ENCODE measurements at regions of chr10 and their contacts with region 1.

Region 1: GRCh38 chr10:87842776-87843497 is 20.4 kb downstream of the KLLN start:
- DNase-seq: no peak
- H3K4me3 ChIP-seq: no peak overlapping the region
- H3K27ac ChIP-seq: no peak overlapping the region
- H3K4me1 ChIP-seq: no peaks in the 10 kb centered on the region
- H3K27me3 ChIP-seq: no peaks in the 10 kb centered on the region
- CTCF ChIP-seq: no peak
- POLR2A ChIP-seq: no peak

Region 2: DNA sequence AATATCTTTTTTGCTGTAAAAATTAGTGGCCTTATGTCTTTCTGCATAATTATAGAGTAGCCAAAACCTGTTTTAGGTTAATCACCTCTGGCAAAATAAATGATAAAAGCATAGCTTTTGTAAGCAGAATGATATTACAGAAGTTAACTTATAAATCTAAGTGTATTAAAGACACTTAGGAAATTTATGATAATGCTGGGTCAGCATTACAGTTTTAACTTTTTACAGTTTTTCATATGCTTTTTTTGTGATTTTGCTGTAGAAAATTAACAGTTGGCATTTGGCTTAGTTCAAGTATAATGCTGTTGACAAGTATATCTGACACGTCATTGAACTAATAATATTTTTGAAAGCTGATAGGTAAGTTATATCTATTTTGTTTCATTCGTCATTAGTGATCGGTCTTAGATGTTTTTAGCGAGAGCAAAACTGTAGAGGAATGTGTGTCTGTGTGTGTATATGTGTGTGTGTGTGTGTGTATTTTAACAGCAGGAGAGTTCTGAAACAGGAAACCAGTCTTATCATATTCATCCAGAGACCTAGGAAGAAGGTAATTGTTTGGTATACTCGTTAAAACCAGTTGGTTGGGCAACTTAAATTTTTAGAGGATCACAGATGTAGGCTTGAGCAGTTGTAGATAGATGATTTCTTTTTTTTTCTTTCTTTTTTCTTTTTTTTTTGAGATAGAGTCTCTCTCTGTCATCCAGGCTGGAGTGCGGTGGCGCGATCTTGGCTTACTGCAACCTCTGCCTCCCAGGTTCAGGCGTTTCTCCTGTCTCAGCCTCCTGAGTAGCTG is 35.9 kb after region 1 on chr10:
- intact Hi-C with region 1: no loop called
- DNase-seq: no peak
- H3K4me3 ChIP-seq: no peak overlapping the region
- H3K27ac ChIP-seq: no peak overlapping the region
- H3K4me1 ChIP-seq: peaks cover 9 to 84% of the 10 kb centered on the region in 2 donors
- H3K27me3 ChIP-seq: no peaks in the 10 kb centered on the region
- CTCF ChIP-seq: no peak
- POLR2A ChIP-seq: no peak

Region 3: DNA sequence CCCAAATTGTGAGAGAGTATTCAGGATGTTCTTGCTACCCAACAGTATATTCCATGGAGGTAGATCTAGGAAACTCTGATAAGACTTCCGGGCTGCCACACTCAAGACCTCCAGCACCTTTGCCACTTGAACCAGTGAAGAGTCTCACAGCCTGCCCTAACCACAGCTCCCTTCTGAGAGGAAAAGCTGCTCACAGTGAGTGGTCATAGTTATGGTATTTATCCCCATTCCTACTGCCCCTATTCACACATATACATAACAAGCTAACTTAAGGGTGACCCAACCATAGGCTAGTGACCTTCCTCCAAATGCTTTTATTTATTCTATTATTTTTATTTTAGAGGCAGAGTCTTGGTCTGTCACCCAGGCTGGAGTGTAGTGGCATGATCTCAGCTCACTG is 176.8 kb after region 1 on chr10:
- intact Hi-C with region 1: no loop called
- DNase-seq: no peak
- H3K4me3 ChIP-seq: no peak overlapping the region
- H3K27ac ChIP-seq: no peak overlapping the region
- H3K4me1 ChIP-seq: no peaks in the 10 kb centered on the region
- H3K27me3 ChIP-seq: no peaks in the 10 kb centered on the region
- CTCF ChIP-seq: no peak
- POLR2A ChIP-seq: no peak

Region 4: GRCh38 chr10:88401671-88402347 is 558.9 kb after region 1 on chr10:
- intact Hi-C with region 1: loop called in 1 of 2 experiments (anchors 10 kb)
- DNase-seq: no peak
- H3K4me3 ChIP-seq: no peak overlapping the region
- H3K27ac ChIP-seq: no peak overlapping the region
- H3K4me1 ChIP-seq: no peaks in the 10 kb centered on the region
- H3K27me3 ChIP-seq: no peaks in the 10 kb centered on the region
- CTCF ChIP-seq: peak in 3 of 6 experiments; percentile 12 to 37 (median 25)
- POLR2A ChIP-seq: no peak